Astrocyte of the cerebellum (primary cell): ENCODE measurements at regions of chr2 and their contacts with region 1.

Region 1: DNA sequence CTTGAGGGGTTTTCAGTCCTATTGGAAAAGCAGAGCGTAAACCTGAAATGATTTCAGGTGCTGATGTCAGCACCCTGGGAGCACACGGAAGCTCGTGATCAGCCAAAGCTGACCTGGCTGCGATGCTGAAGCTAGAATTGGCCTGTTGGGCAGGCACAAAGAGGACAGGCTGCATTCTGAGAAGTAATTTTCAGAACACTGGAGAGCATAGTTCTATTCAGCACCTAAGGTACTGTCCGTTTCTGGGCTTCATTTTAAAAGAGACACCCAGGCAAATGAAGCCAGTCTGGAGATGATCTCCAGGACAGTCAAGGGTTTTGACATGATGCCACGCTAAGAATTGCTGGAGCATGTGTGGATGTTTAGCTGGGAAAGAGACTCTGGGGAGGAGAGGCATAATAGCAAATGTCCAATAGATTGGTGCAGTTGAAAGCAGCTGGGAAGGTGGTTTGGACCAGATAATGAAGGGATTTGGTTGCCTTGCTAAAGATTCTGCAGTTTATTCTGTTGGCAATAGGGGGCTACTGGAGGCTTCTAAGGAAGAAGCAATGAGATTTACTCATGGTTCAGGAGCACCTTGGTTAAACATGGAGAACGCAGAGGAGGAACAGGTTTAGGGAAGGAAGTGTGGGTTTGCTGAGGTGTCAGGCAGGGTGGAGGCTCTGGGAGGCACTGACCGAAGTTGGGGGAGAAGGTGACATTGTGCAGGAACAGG is 86.6 kb downstream of the ACOXL start:
- DNase-seq: no peak
- H3K4me3 ChIP-seq: no peak overlapping the region
- CTCF ChIP-seq: peak; percentile 32

Region 2: DNA sequence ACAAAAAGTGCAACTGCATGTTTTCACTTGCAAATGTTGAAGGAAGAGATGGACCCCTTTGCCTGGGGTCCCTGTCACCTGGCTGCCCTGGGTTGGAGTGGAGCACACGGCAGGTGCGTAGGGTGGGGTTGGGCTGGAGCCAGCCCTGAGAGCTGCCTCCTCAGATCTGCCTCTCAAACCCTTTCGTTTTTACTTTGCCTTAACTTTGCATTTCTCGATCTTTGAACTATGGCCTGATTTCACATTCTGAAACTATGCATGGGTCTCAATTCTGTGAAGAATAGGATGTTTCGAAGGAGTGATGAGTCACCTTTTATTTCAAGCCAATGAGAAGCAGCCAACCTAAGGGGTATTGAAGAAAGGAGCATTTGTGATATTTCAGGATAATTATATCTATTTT is 46.3 kb after region 1 on chr2:
- in situ Hi-C with region 1: loop called (anchors 5 kb)
- DNase-seq: no peak
- H3K4me3 ChIP-seq: no peak overlapping the region
- CTCF ChIP-seq: no peak